AG04450 (cell line): ENCODE measurements at regions of chr20 and their contacts with region 1.

Region 1: GRCh38 chr20:10553326-10553984 is 118.3 kb downstream of the SLX4IP start:
- DNase-seq: peak; percentile 55
- H3K4me3 ChIP-seq: no peak overlapping the region
- H3K27ac ChIP-seq: no peak overlapping the region
- H3K27me3 ChIP-seq: no peaks in the 10 kb centered on the region
- CTCF ChIP-seq: peak; percentile 83

Region 2: DNA sequence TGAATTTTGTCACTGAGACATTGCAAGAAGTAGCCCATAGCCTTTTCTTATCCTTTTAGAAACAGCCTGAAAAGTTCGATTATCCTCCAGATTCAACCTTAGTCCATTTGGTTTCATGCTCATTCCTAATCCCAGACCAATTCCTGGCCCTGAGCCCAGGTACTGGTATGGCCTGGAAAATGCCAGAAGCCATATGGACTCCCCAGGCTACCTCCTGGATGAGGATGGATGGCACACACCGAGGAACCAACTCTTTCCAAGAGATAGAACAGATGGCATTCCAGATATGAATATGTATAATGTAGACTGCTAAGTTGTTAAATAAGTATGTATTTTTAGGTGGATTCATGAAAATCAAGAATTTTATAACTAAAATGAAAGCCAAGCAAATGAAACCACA is 386.4 kb before region 1 on chr20:
- CTCF ChIA-PET with region 1: no interaction called
- POLR2A ChIA-PET with region 1: no interaction called
- DNase-seq: no peak
- H3K4me3 ChIP-seq: no peak overlapping the region
- H3K27ac ChIP-seq: no peak overlapping the region
- H3K27me3 ChIP-seq: peaks cover 6% of the 10 kb centered on the region
- CTCF ChIP-seq: no peak

Region 3: GRCh38 chr20:10316582-10316981 is 236.9 kb before region 1 on chr20:
- CTCF ChIA-PET with region 1: no interaction called
- POLR2A ChIA-PET with region 1: no interaction called
- DNase-seq: no peak
- H3K4me3 ChIP-seq: no peak overlapping the region
- H3K27ac ChIP-seq: no peak overlapping the region
- H3K27me3 ChIP-seq: no peaks in the 10 kb centered on the region
- CTCF ChIP-seq: 0 out of 2 replicates have a peak, but pooled peaks have one; percentile 6

Region 4: DNA sequence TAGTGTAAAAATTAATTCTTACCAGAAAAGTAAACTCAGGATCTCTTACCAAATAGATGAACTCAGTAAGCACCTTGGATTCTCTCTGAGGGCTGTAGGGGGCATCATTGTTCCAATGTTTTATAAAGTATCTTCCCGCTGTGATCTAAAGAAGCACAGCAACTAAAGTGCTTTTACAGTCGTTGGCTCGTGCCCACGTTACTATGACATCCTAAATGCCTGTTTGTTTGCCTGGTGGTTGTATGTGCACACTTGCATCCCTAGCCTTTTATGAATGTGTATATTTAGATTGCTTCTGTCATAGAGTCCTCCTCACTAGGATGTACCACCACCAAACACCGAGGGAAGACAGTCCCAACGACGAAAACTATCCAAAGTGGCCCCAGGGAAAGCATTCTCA is 83.9 kb before region 1 on chr20:
- CTCF ChIA-PET with region 1: interaction called, 15 read pairs
- POLR2A ChIA-PET with region 1: no interaction called
- DNase-seq: peak; percentile 63
- H3K4me3 ChIP-seq: no peak overlapping the region
- H3K27ac ChIP-seq: no peak overlapping the region
- H3K27me3 ChIP-seq: no peaks in the 10 kb centered on the region
- CTCF ChIP-seq: peak; percentile 73

Region 5: GRCh38 chr20:10636326-10636818 is 82.9 kb after region 1 on chr20:
- CTCF ChIA-PET with region 1: interaction called, 10 read pairs
- POLR2A ChIA-PET with region 1: no interaction called
- DNase-seq: peak; percentile 44
- H3K4me3 ChIP-seq: no peak overlapping the region
- H3K27ac ChIP-seq: peak overlapping the region; percentile 57
- H3K27me3 ChIP-seq: no peaks in the 10 kb centered on the region
- CTCF ChIP-seq: no peak

Region 6: DNA sequence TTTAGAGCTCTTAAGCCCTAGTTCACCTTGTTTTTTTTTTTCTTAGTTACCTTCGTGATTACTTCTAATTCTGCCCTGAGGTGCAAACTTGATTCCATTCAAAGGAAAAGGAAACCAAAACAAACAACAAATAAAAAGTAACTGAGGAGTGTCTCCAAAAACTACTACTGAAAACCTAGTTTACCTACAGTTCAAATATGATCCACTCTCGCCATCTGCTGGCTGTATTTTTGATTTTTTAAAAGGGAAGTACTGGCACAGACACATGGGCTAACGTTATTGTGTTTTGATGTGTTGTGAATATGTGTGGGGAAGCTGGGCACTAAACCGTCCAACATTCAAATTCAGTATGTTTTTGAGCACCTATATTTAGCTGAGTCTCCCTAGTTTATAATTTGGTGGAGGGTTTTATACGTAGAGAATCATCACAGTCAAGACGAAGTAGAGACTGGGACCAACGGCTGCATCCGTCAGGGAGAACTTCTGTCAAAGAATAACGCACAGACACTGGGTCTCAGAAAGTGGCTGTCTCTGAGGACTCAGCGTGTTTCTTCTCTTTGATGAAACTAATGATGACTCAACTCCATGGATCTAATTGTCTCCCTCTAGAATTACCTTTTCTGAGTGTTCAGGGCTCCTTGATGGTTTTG is 990.7 kb after region 1 on chr20:
- CTCF ChIA-PET with region 1: interaction called, 21 read pairs
- POLR2A ChIA-PET with region 1: no interaction called
- DNase-seq: peak; percentile 37
- H3K4me3 ChIP-seq: peak overlapping the region; percentile 17
- H3K27ac ChIP-seq: no peak overlapping the region
- H3K27me3 ChIP-seq: no peaks in the 10 kb centered on the region
- CTCF ChIP-seq: peak; percentile 63